ENCODE measurements at regions of chr16 and their contacts with region 1.

Region 1: GRCh38 chr16:75385507-75386152 is 47.7 kb downstream of the CFDP1 start:
- DNase-seq: peak; percentile 61
- CTCF ChIP-seq: peak; percentile 58

Region 2: GRCh38 chr16:75218256-75219070 is 167.2 kb before region 1 on chr16 and contains the start of gene CTRB1:
- in situ Hi-C with region 1: loop called (anchors 10 kb)
- DNase-seq: peak; percentile 68
- CTCF ChIP-seq: no peak

Region 3: GRCh38 chr16:75319513-75320411 is 65.9 kb before region 1 on chr16:
- in situ Hi-C with region 1: no loop called
- DNase-seq: peak; percentile 52
- CTCF ChIP-seq: no peak